PC-9 (cell line): ENCODE measurements at regions of chr1 and their contacts with region 1.

Region 1: DNA sequence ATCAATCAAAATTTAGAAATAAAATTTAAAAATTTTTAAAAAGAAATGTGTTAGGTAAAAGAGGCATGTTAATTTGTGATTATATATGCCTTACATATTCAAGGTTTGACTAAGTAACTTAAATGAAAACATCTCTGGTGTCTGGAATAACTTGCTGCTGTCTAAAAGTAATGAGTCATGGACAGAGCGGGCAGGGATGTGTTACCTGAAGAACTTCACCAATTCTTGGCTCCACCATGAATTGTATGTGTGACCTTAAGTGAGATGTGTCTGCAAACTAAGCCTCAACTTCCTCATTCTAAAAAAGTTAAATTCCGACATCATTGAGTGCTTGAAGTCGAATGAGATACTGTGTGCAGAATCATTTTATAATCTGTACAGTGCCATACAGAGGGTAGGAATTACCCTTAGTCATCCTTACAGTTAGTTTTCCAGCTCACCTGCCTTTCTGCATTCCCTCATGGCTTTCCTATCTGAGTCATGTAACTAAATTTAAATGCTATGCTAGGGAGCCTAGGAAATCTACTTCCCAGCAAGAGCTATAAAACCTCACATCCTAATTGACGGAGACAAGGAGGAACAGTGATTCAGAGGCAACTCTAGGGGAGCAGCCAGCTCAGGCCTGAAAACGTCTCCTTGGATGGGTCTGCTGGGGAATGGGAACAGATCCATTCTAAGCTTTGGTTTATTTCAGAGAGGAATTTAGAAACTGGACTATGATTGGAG is 100.7 kb upstream of the TSPAN2 start:
- DNase-seq: peak; percentile 49 to 100
- H3K4me3 ChIP-seq: no peak overlapping the region; the same call in 1 of the 2 replicates
- H3K27ac ChIP-seq: peak overlapping the region; percentile 100
- H3K4me1 ChIP-seq: peaks cover 88% of the 10 kb centered on the region
- H3K27me3 ChIP-seq: no peaks in the 10 kb centered on the region
- CTCF ChIP-seq: no peak

Region 2: GRCh38 chr1:115179397-115179835 is 10.6 kb before region 1 on chr1:
- CTCF ChIA-PET with region 1: no interaction called
- POLR2A ChIA-PET with region 1: interaction called, 23 read pairs
- intact Hi-C with region 1: no loop called
- DNase-seq: peak; percentile 92 to 100
- H3K4me3 ChIP-seq: no peak overlapping the region
- H3K27ac ChIP-seq: peak overlapping the region; percentile 89
- H3K4me1 ChIP-seq: peaks cover 57% of the 10 kb centered on the region
- H3K27me3 ChIP-seq: no peaks in the 10 kb centered on the region
- CTCF ChIP-seq: no peak

Region 3: GRCh38 chr1:115275212-115275611 is 85.2 kb after region 1 on chr1:
- CTCF ChIA-PET with region 1: no interaction called
- POLR2A ChIA-PET with region 1: no interaction called
- intact Hi-C with region 1: no loop called
- DNase-seq: no peak
- H3K4me3 ChIP-seq: no peak overlapping the region
- H3K27ac ChIP-seq: no peak overlapping the region
- H3K4me1 ChIP-seq: no peaks in the 10 kb centered on the region
- H3K27me3 ChIP-seq: no peaks in the 10 kb centered on the region
- CTCF ChIP-seq: peak; percentile 74

Region 4: GRCh38 chr1:115302390-115302961 is 112.5 kb after region 1 on chr1:
- CTCF ChIA-PET with region 1: no interaction called
- POLR2A ChIA-PET with region 1: no interaction called
- intact Hi-C with region 1: loop called (anchors 5 kb)
- DNase-seq: peak in 1 of 2 experiments; percentile 46
- H3K4me3 ChIP-seq: no peak overlapping the region
- H3K27ac ChIP-seq: no peak overlapping the region
- H3K4me1 ChIP-seq: peaks cover 10% of the 10 kb centered on the region
- H3K27me3 ChIP-seq: no peaks in the 10 kb centered on the region
- CTCF ChIP-seq: no peak

Region 5: GRCh38 chr1:115463363-115463746 is 273.4 kb after region 1 on chr1:
- CTCF ChIA-PET with region 1: interaction called, 3 read pairs
- POLR2A ChIA-PET with region 1: interaction called, 6 read pairs
- intact Hi-C with region 1: loop called (anchors 1 kb)
- DNase-seq: peak in 1 of 2 experiments; percentile 56
- H3K4me3 ChIP-seq: no peak overlapping the region
- H3K27ac ChIP-seq: no peak overlapping the region
- H3K4me1 ChIP-seq: peaks cover 50% of the 10 kb centered on the region
- H3K27me3 ChIP-seq: no peaks in the 10 kb centered on the region
- CTCF ChIP-seq: peak; percentile 87

Region 6: GRCh38 chr1:115506926-115507589 is 317.1 kb after region 1 on chr1:
- CTCF ChIA-PET with region 1: no interaction called
- POLR2A ChIA-PET with region 1: no interaction called
- intact Hi-C with region 1: no loop called
- DNase-seq: peak in 1 of 2 experiments; percentile 17
- H3K4me3 ChIP-seq: no peak overlapping the region
- H3K27ac ChIP-seq: no peak overlapping the region
- H3K4me1 ChIP-seq: peaks cover 16% of the 10 kb centered on the region
- H3K27me3 ChIP-seq: no peaks in the 10 kb centered on the region
- CTCF ChIP-seq: peak; percentile 38